Heart right ventricle (tissue), 16 donors: ENCODE measurements at regions of chr6 and their contacts with region 1.

Region 1: DNA sequence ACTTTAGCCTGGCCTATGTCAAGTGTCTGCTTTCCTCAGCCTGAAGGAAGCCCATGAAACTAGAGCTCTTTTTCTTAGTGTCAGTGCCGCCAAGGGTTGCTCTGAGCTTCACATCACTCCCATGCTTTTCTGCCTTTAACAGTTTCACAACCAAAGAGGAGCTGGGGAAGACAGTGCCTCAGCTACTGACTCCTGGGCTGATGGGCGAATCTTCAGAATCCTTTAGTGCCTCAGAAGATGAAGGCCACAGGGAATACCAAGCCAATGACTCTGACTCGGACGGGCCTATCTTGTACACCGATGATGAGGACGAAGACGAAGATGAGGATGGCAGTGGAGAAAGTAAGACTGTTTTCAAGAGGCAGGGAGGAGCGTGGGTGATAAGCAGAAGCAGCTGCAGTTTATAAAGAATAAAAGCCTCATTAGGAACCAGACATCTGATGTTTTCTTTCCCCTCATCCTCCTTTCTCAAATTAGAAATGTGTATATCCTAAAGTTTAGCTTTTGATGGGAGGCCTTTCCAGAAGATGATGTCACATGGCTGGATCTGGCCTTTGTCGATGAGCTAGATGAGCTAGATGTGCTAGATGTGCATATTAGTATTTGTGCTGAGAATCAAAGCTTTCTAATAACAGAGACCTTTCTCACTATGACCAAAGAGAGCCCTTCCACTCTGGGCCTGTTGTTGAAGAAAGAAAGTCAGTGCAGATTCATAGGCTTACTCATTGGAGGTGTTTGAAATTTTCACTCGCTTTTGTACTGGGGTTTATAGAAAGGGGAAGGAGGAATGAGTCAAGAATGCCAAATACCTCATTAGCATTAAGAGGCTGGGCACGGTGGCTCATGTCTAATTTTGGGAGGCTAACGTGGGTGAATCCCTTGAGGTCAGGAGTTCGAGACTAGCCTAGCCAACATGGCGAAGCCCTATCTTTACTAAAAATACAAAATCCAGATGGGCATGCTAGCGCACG is 70.7 kb upstream of the LTV1 start:
- DNase-seq: no peak
- ATAC-seq: peak in 7 of 8 donors; percentile 20 to 63 (median 42)
- H3K4me3 ChIP-seq: no peak overlapping the region
- H3K27ac ChIP-seq: peak overlapping the region in 7 of 10 donors; percentile 15 to 57 (median 36)
- H3K4me1 ChIP-seq: peaks cover 8 to 44% (median 31%) of the 10 kb centered on the region in 9 donors
- H3K27me3 ChIP-seq: no peaks in the 10 kb centered on the region
- CTCF ChIP-seq: no peak

Region 2: GRCh38 chr6:143575440-143575839 is 197.0 kb before region 1 on chr6:
- intact Hi-C with region 1: loop called in 1 of 10 experiments (anchors 10 kb)
- DNase-seq: peak in 1 of 2 donors; percentile 67
- ATAC-seq: peak; percentile 70 to 92 (median 88)
- H3K4me3 ChIP-seq: no peak overlapping the region
- H3K27ac ChIP-seq: peak overlapping the region in 4 of 10 donors; percentile 18 to 59 (median 38)
- H3K4me1 ChIP-seq: peaks cover 0 to 16% (median 0%) of the 10 kb centered on the region in 9 donors
- H3K27me3 ChIP-seq: no peaks in the 10 kb centered on the region
- CTCF ChIP-seq: peak; percentile 74 to 97 (median 91)

Region 3: DNA sequence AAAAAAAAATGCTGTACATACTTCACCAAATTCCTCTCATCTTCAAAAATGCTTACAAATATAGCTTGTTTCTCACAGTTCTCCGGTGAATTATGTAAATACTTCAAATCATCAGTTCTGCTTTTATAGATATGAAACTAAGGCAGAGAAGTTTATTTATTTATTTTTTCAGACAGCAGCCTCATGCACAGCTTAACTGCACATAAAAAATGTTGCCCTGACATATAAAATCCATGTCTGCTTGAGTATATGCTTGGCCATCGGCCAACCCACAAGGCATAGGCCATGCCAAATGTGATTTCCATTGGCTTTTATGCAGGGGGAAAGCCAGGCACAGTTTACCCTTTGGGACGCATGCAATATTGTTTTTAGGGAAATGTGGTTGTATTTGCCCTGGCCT is 152.0 kb before region 1 on chr6:
- intact Hi-C with region 1: no loop called
- DNase-seq: no peak
- ATAC-seq: no peak
- H3K4me3 ChIP-seq: no peak overlapping the region
- H3K27ac ChIP-seq: no peak overlapping the region
- H3K4me1 ChIP-seq: peaks cover 0 to 11% (median 0%) of the 10 kb centered on the region in 9 donors
- H3K27me3 ChIP-seq: no peaks in the 10 kb centered on the region
- CTCF ChIP-seq: no peak